AG04450 (cell line): ENCODE measurements at regions of chr5 and their contacts with region 1.

Region 1: GRCh38 chr5:65035211-65036206 is 266.8 kb downstream of the CWC27 start:
- DNase-seq: peak; percentile 71
- H3K4me3 ChIP-seq: peak overlapping the region; percentile 64
- H3K27ac ChIP-seq: peak overlapping the region; percentile 89
- H3K27me3 ChIP-seq: no peaks in the 10 kb centered on the region
- CTCF ChIP-seq: no peak

Region 2: DNA sequence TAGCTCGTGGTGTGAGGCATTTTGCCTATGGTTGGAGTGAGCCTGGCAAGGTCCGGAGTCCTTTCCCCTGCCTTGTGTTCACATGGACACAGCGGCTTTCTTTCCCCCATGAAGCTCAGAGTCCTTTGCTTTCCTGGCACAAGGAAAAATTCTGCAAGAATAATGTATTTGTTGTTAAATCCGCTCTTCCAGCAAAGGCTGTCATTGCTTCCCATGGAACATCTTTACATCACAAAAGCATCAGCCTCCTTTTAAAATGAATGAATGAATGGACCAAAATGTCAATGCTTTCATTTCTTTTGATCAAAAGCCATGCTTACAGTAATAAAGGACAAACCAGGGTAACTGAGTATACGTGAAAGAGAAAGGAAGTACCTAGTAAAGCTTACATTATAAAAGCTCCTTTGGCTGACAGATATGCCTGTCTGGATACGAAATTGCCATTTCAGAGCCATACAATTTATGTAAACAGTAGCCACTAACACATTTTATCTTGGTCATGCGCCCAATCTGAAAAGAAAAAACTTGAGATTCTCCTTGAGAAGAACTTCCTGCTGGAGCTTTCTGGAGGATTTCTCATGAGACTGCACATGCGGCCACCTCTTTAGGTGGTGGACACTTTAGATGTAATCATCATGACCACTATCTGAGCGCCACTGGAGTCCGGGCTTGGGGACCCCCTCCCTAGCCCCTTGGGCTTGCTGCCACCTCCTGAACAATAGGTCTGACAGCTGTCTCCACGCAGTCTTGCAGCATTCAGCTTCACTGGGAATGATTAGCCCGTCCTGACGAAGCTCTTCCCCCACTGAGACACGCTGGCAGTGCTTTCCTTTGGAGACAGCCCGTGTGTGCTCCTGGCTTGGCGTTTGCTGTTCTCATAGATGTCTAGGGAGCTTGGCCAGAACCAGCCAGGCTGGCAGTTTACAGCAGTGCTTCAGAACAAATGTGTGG is 90.4 kb after region 1 on chr5:
- CTCF ChIA-PET with region 1: no interaction called
- POLR2A ChIA-PET with region 1: interaction called, 13 read pairs
- DNase-seq: no peak
- H3K4me3 ChIP-seq: no peak overlapping the region
- H3K27ac ChIP-seq: peak overlapping the region; percentile 99
- H3K27me3 ChIP-seq: no peaks in the 10 kb centered on the region
- CTCF ChIP-seq: no peak